PC-3 (cell line): ENCODE measurements at regions of chr6 and their contacts with region 1.

Region 1: DNA sequence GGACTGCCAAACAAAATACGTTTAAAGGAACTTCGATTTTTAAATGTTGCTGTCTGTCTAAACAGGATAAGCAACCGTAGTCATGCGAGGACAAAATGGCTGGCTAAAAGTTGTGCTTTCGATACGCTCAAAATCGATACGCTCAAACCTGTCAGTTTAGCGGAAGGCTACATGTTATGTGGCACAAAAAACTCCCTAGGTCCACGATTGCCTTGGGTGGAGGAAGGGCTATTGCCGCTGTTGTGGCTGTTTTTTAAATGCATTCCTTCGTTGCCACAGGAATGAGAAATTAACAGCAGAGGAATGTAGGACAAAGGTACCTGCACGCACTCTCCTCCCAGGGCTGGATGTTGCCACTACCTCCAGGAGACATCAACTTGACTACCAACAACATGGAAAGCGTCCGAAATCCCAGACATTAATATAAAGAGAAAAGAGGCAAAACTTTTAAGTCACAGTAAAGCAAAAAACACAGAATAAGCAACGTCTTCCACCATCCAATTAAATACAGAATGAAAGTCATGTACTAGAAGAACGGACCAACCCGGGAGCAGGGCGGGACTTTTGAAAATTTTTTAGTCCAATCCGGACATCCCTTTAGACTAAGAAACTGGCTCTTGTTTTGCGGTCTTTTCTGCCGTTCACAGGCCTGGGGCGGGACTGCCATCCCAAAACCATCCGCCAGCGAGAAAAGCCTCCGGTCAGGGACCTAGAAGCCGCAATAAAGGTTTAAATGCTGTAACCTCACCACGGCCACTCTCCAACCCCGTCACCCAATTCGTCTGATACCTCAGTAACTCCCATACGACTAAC is 32.2 kb upstream of the HFE start:
- DNase-seq: peak; percentile 93
- ATAC-seq: peak; percentile 53
- H3K4me3 ChIP-seq: peak overlapping the region; percentile 78
- H3K27ac ChIP-seq: peak overlapping the region; percentile 81
- H3K4me1 ChIP-seq: peaks cover 10% of the 10 kb centered on the region
- H3K27me3 ChIP-seq: no peaks in the 10 kb centered on the region
- CTCF ChIP-seq: no peak

Region 2: GRCh38 chr6:25842526-25843277 is 212.4 kb before region 1 on chr6:
- CTCF ChIA-PET with region 1: no interaction called
- POLR2A ChIA-PET with region 1: no interaction called
- intact Hi-C with region 1: no loop called
- DNase-seq: no peak
- ATAC-seq: no peak
- H3K4me3 ChIP-seq: no peak overlapping the region
- H3K27ac ChIP-seq: no peak overlapping the region
- H3K4me1 ChIP-seq: no peaks in the 10 kb centered on the region
- H3K27me3 ChIP-seq: peaks cover 87% of the 10 kb centered on the region
- CTCF ChIP-seq: no peak

Region 3: DNA sequence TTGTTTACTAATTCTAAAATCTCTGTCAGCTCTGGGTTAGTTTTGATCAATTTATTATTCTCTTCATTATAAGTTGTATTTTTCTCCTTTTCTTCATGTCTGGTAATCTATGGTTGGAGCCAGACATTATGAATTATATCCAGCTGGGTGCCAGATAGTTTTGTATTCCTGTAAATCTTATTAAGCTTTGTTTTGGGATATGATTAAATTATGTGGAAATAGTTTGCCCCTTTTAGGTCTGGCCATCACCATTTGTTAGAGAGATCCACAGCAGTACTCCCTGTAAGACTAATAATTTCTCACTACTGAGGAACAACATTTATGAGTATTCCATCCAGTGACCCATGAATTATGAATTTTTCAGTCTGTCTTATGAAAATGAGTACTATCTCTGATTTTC is 202.3 kb before region 1 on chr6:
- CTCF ChIA-PET with region 1: no interaction called
- POLR2A ChIA-PET with region 1: no interaction called
- intact Hi-C with region 1: no loop called
- DNase-seq: no peak
- ATAC-seq: no peak
- H3K4me3 ChIP-seq: no peak overlapping the region
- H3K27ac ChIP-seq: no peak overlapping the region
- H3K4me1 ChIP-seq: no peaks in the 10 kb centered on the region
- H3K27me3 ChIP-seq: peaks cover 61% of the 10 kb centered on the region
- CTCF ChIP-seq: no peak

Region 4: DNA sequence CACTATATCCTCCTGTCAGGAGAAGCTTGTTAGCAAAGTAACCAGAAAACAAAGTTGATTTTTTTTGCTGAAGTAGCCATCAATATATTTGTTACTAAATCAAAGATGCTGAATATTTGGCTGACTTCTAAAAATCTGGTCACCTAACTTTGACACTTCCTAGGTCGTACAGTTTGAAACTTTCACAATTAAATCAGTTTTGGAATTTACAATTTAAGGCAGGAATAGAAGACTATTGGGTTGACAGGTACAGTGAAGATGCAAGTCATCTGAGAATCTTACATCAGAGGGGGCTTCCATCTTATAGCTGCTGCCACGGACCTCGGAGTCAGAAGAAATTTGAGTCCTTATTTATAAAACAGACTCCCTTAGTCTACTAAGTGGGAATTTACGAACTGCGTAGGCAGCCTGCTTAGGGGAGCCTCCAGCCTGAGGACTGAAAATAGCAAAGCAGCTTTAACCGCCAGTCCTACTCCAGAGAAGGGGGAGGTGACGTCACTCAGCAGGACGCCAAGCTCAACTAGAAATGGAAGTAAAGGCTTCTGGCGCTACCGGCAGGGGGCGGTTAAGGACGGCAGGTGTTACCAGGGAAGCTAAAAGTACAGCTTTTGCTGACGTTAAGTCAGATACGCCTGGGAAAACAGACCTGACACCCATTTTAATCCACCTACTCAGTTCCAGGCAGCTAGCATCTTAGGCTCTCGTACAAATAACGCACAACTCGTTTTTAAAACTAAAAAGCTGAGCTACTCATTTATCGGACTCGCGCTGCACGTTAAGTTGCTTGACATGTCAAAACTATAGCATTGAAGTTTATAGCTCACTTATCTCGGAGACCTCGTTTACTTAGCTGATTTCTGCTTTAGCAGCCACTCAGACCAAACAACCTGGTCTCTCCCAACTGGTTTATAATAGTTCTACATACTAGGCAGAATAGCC is 28.9 kb before region 1 on chr6:
- CTCF ChIA-PET with region 1: interaction called, 4 read pairs
- POLR2A ChIA-PET with region 1: interaction called, 7 read pairs
- intact Hi-C with region 1: loop called (anchors 1 kb)
- DNase-seq: peak; percentile 96
- ATAC-seq: peak; percentile 37
- H3K4me3 ChIP-seq: peak overlapping the region; percentile 73
- H3K27ac ChIP-seq: peak overlapping the region; percentile 56
- H3K4me1 ChIP-seq: peaks cover 60% of the 10 kb centered on the region
- H3K27me3 ChIP-seq: no peaks in the 10 kb centered on the region
- CTCF ChIP-seq: peak; percentile 85

Region 5: DNA sequence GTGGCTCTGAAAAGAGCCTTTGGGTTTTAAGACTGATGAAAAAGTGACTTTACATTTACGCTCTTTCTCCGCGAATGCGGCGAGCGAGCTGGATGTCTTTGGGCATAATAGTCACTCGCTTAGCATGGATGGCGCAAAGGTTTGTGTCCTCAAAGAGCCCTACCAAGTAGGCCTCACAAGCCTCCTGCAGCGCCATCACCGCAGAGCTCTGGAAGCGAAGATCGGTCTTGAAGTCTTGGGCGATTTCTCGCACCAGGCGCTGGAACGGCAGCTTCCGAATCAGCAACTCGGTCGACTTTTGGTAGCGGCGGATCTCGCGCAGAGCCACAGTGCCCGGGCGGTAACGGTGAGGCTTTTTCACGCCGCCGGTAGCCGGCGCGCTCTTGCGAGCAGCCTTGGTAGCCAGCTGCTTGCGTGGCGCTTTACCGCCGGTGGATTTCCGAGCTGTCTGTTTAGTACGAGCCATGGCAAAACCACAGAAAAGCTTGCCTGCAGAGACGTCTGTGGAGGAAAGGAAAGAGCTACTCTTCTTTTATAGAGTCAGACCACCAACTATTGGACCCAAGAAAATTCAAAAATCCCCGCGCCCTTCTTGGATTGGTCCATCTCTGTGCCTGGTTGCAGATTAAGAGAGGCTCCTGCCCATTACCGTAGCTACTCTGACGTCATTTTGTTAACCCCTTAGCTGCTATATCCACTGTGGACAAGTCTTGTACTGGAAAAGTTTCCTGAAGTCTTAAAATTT is 23.3 kb before region 1 on chr6:
- CTCF ChIA-PET with region 1: interaction called, 4 read pairs
- POLR2A ChIA-PET with region 1: interaction called, 7 read pairs
- intact Hi-C with region 1: loop called (anchors 1 kb)
- DNase-seq: peak; percentile 99
- ATAC-seq: peak; percentile 60
- H3K4me3 ChIP-seq: peak overlapping the region; percentile 83
- H3K27ac ChIP-seq: peak overlapping the region; percentile 82
- H3K4me1 ChIP-seq: peaks cover 40% of the 10 kb centered on the region
- H3K27me3 ChIP-seq: no peaks in the 10 kb centered on the region
- CTCF ChIP-seq: no peak

Region 6: DNA sequence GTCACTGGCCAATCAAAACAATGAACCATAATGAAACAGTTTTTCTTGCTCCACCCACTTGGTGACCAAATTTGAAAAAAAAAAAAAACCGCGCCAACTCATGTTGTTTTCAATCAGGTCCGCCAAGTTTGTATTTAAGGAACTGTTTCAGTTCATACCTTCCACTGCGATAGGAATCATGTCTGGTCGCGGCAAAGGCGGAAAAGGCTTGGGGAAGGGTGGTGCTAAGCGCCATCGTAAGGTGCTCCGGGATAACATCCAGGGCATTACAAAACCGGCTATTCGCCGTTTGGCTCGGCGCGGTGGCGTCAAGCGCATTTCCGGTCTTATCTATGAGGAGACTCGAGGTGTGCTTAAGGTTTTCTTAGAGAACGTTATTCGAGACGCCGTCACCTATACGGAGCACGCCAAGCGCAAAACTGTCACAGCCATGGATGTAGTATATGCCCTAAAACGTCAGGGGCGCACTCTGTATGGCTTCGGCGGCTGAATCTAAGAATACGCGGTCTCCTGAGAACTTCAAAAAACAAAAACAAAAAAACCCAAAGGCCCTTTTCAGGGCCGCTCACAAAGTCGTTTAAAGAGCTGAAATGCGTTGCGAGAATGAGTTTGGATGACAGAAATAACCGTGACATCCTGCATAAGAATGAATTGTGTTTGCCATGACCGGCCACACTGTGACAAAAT is 48.9 kb after region 1 on chr6:
- CTCF ChIA-PET with region 1: interaction called, 7 read pairs
- POLR2A ChIA-PET with region 1: interaction called, 11 read pairs
- intact Hi-C with region 1: loop called (anchors 2 kb)
- DNase-seq: peak; percentile 97
- ATAC-seq: peak; percentile 81
- H3K4me3 ChIP-seq: peak overlapping the region; percentile 68
- H3K27ac ChIP-seq: peak overlapping the region; percentile 84
- H3K4me1 ChIP-seq: peaks cover 28% of the 10 kb centered on the region
- H3K27me3 ChIP-seq: no peaks in the 10 kb centered on the region
- CTCF ChIP-seq: peak; percentile 46; the same call in 1 of the 2 replicates

Region 7: GRCh38 chr6:27295301-27296081 is 1240.4 kb after region 1 on chr6:
- CTCF ChIA-PET with region 1: no interaction called
- POLR2A ChIA-PET with region 1: no interaction called
- intact Hi-C with region 1: no loop called
- DNase-seq: peak; percentile 88
- ATAC-seq: peak; percentile 55
- H3K4me3 ChIP-seq: peak overlapping the region; percentile 76
- H3K27ac ChIP-seq: no peak overlapping the region
- H3K4me1 ChIP-seq: peaks cover 16% of the 10 kb centered on the region
- H3K27me3 ChIP-seq: no peaks in the 10 kb centered on the region
- CTCF ChIP-seq: no peak